CD8-positive, alpha-beta T cell (primary cell): ENCODE measurements at regions of chr14 and their contacts with region 1.

Region 1: GRCh38 chr14:51989293-51990234 is at the start of gene RTRAF:
- DNase-seq: peak; percentile 77 to 97 (median 91)
- ATAC-seq: peak; percentile 96
- H3K4me3 ChIP-seq: peak within 1 kb of the TSS; percentile 65 to 84
- H3K4me3 Mint-ChIP-seq: peak within 1 kb of the TSS; percentile 94
- H3K27ac ChIP-seq: peak within 1 kb of the TSS; percentile 84 to 85
- H3K27ac Mint-ChIP-seq: peak within 1 kb of the TSS; percentile 94
- H3K4me1 ChIP-seq: peaks cover 15% of the 10 kb centered on the region
- H3K4me1 Mint-ChIP-seq: peaks cover 46% of the 10 kb centered on the region
- H3K27me3 ChIP-seq: no peaks in the 10 kb centered on the region
- H3K27me3 Mint-ChIP-seq: no peaks in the 10 kb centered on the region
- CTCF ChIP-seq: no peak
- total RNA-seq, gene RTRAF: 155 to 161 TPM

Region 2: DNA sequence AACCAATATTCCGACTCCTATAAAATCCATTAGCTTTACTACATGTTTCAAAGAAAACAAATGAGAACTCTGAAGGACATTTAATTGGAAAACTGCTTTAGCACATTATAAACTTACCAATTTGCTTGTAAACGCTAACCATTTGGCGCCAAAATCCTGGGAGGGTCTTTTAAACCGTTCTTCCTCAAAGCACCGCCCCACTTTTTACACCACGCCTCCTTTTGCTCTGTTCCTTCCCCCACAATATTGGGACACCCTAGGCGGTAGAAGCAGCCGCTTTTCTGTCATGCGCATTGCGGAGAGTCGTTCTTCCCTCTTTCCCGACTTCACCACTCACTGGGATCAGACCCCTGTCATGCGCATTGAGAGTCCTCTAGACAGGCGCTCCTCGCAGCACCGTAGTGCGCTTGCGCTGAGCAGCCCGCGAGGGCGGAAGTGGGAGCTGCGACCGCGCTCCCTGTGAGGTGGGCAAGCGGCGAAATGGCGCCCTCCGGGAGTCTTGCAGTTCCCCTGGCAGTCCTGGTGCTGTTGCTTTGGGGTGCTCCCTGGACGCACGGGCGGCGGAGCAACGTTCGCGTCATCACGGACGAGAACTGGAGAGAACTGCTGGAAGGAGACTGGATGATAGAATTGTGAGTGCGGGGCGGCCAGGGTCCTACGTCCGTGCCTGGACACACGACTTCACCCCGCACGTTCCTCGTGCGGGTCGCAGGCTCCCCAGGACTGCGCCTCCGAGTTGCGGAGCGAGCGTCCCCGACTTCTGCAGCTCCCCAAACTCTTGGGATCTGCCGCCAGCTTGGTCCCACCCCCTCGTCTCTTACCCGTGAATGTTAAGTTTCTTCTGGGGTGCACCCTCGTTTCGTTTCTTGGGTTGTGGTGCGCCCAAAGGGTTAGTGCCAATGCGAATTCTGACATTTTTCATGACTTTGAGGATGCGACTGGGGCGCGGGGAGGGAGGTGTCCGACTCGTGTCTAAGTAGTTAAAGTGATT is 749.5 kb before region 1 on chr14 and contains the start of gene TMX1:
- CTCF ChIA-PET with region 1: interaction called, 3 read pairs
- POLR2A ChIA-PET with region 1: no interaction called
- intact Hi-C with region 1: loop called (anchors 1 to 5 kb)
- DNase-seq: peak; percentile 58 to 94 (median 85)
- ATAC-seq: peak; percentile 93
- H3K4me3 ChIP-seq: peak within 1 kb of the TSS; percentile 76 to 95
- H3K4me3 Mint-ChIP-seq: no peak within 1 kb of the TSS
- H3K27ac ChIP-seq: peak within 1 kb of the TSS; percentile 57 to 77
- H3K27ac Mint-ChIP-seq: no peak within 1 kb of the TSS
- H3K4me1 ChIP-seq: peaks cover 30% of the 10 kb centered on the region
- H3K4me1 Mint-ChIP-seq: peaks cover 24% of the 10 kb centered on the region
- H3K27me3 ChIP-seq: no peaks in the 10 kb centered on the region
- H3K27me3 Mint-ChIP-seq: no peaks in the 10 kb centered on the region
- CTCF ChIP-seq: no peak
- total RNA-seq, gene TMX1: 10.2 to 11.1 TPM

Region 3: DNA sequence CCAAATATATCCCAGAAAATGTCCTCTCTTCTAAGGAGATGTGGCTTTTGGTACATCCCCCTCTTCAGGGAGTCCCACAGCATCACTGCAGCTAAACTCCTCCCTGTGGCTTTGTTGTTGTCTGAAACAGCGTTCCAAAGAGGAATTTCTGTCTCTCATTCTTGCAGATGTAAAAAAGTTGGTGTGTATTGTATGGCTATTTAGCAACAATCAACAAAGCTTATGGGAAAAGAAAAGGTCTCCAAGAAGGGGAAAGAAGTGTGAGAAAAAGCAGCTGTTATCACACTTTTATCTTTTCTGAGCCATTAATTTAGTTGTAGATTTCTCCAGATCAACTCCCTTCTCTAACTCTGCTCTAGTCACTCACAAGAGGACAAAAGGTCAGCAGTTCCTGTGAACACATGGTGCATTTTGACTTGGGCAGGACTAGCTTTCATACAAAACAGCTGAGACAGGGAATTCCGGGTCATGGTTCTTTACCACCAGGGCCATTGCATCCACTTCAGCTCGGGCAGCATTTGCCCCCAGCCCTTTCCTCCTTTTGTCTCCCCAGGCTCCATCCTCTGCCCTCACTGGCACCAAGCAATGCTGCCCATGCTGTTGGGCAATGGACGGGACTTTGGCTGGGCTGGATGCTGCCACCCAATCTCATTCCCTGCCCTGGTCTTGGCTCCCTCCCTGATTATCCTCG is 564.9 kb before region 1 on chr14:
- CTCF ChIA-PET with region 1: no interaction called
- POLR2A ChIA-PET with region 1: no interaction called
- intact Hi-C with region 1: loop called in 1 of 2 experiments (anchors 10 kb)
- DNase-seq: no peak
- ATAC-seq: no peak
- H3K4me3 ChIP-seq: no peak overlapping the region
- H3K4me3 Mint-ChIP-seq: no peak overlapping the region
- H3K27ac ChIP-seq: no peak overlapping the region
- H3K27ac Mint-ChIP-seq: no peak overlapping the region
- H3K4me1 ChIP-seq: peaks cover 14% of the 10 kb centered on the region
- H3K4me1 Mint-ChIP-seq: peaks cover 15% of the 10 kb centered on the region
- H3K27me3 ChIP-seq: peaks cover 0 to 3% of the 10 kb centered on the region in 2 experiments
- H3K27me3 Mint-ChIP-seq: peaks cover 16% of the 10 kb centered on the region
- CTCF ChIP-seq: no peak

Region 4: GRCh38 chr14:51547260-51547659 is 442.3 kb before region 1 on chr14:
- CTCF ChIA-PET with region 1: no interaction called
- POLR2A ChIA-PET with region 1: no interaction called
- intact Hi-C with region 1: no loop called
- DNase-seq: no peak
- ATAC-seq: no peak
- H3K4me3 ChIP-seq: no peak overlapping the region
- H3K4me3 Mint-ChIP-seq: no peak overlapping the region
- H3K27ac ChIP-seq: no peak overlapping the region
- H3K27ac Mint-ChIP-seq: no peak overlapping the region
- H3K4me1 ChIP-seq: no peaks in the 10 kb centered on the region
- H3K4me1 Mint-ChIP-seq: no peaks in the 10 kb centered on the region
- H3K27me3 ChIP-seq: peaks cover 0 to under 1% of the 10 kb centered on the region in 2 experiments
- H3K27me3 Mint-ChIP-seq: peaks cover 8% of the 10 kb centered on the region
- CTCF ChIP-seq: no peak

Region 5: GRCh38 chr14:52015411-52016030 is 26.0 kb after region 1 on chr14:
- CTCF ChIA-PET with region 1: no interaction called
- POLR2A ChIA-PET with region 1: no interaction called
- intact Hi-C with region 1: no loop called
- DNase-seq: no peak
- ATAC-seq: no peak
- H3K4me3 ChIP-seq: no peak overlapping the region
- H3K4me3 Mint-ChIP-seq: no peak overlapping the region
- H3K27ac ChIP-seq: no peak overlapping the region
- H3K27ac Mint-ChIP-seq: no peak overlapping the region
- H3K4me1 ChIP-seq: peaks cover 10% of the 10 kb centered on the region
- H3K4me1 Mint-ChIP-seq: peaks cover 9% of the 10 kb centered on the region
- H3K27me3 ChIP-seq: no peaks in the 10 kb centered on the region
- H3K27me3 Mint-ChIP-seq: peaks cover 5% of the 10 kb centered on the region
- CTCF ChIP-seq: no peak